MCF 10A (cell line): ENCODE measurements at regions of chr20 and their contacts with region 1.

Region 1: GRCh38 chr20:33862709-33863403 is 51.7 kb downstream of the CHMP4B start:
- DNase-seq: peak; percentile 33
- H3K4me3 Mint-ChIP-seq: no peak overlapping the region
- H3K27ac Mint-ChIP-seq: no peak overlapping the region
- H3K4me1 Mint-ChIP-seq: no peaks in the 10 kb centered on the region
- H3K27me3 Mint-ChIP-seq: peaks cover 20% of the 10 kb centered on the region
- CTCF ChIP-seq: peak; percentile 42

Region 2: DNA sequence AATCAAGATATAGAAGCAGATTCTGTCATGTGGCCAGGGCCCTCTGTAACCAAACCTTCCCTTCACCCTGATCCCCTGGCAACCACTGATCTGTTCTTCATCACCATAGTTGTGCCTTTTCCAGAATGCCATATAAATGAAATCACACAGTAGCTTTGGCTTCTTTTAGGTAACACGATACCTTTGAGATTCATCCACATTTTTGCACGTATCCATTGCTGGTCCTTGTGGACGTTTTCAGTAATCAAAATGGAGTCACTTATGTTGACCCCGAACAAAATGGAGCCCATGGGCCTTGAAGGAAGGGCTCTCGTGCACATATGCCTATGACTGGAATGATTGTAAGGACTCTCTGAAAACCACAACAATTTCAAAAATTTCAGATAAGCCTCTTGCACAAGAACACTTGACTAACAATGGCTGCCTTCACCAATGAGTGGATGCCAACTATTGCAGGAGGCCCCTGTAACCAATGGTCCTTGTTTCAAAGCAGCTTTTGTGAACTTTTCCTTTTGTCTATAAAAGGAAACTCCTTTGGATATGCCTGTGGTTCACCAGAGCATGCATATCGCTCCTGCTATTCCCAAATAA is 46.6 kb after region 1 on chr20:
- CTCF ChIA-PET with region 1: interaction called, 4 read pairs
- POLR2A ChIA-PET with region 1: no interaction called
- intact Hi-C with region 1: loop called (anchors 5 kb)
- DNase-seq: peak; percentile 52
- H3K4me3 Mint-ChIP-seq: no peak overlapping the region
- H3K27ac Mint-ChIP-seq: no peak overlapping the region
- H3K4me1 Mint-ChIP-seq: peaks cover 6% of the 10 kb centered on the region
- H3K27me3 Mint-ChIP-seq: peaks cover 22% of the 10 kb centered on the region
- CTCF ChIP-seq: no peak

Region 3: DNA sequence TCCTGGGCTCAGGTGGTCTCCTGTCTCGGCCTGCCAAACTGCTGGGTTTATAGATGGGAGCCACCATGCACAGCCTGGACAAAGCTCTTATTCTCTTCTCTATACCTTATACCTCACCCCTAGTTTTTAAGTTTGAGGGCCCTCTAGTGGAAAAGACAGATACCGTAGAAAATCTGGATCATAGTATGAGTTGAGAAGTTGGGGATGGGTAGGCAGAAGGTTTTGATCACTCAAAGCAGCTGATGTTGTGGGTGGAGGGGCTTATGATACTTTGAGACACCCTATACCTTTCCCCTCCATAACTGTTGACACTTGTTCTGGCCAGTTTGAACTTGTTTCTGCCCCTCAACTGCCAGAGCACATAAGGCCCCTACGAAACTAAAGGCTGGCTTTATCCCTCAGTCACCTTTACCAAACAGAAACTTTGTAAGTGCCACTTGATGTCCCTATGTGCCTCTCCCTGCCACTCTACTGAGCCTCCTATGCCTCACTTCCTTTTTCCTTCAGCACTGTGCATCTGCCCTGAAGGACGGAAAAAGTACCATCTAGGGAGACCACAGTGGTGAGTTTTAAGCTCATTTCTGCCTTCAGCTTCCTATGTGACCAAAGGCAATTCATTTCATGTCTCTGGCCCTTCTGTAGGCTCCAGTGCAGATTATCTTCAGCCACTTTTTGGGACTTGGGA is 159.4 kb after region 1 on chr20:
- CTCF ChIA-PET with region 1: no interaction called
- POLR2A ChIA-PET with region 1: no interaction called
- intact Hi-C with region 1: loop called (anchors 1 kb)
- DNase-seq: peak; percentile 45
- H3K4me3 Mint-ChIP-seq: no peak overlapping the region
- H3K27ac Mint-ChIP-seq: no peak overlapping the region
- H3K4me1 Mint-ChIP-seq: peaks cover 29% of the 10 kb centered on the region
- H3K27me3 Mint-ChIP-seq: no peaks in the 10 kb centered on the region
- CTCF ChIP-seq: peak; percentile 32